Astrocyte of the cerebellum (primary cell): ENCODE measurements at regions of chr1 and their contacts with region 1.

Region 1: DNA sequence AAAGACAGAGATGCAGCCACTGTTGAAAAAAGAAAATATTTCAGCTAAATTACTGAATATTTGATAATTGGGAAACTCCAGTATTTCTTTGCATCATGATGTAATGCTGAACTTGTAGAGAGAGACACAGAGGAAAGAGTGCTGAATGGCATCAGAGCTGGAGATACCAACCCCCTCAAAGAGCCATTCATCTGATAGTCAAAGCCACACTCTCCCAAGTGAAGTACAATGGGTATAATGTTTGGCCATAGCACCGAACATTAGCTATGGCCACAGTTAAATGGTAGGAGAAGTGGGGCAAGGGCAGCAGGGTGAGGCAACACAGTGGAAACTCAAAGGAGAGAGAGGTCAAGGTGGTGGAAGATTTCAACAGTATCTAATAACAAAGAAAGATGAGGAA is 107.5 kb upstream of the TNFSF4 start:
- DNase-seq: no peak
- H3K4me3 ChIP-seq: no peak overlapping the region
- CTCF ChIP-seq: no peak

Region 2: GRCh38 chr1:172895050-172895460 is 419.6 kb before region 1 on chr1:
- in situ Hi-C with region 1: no loop called
- DNase-seq: no peak
- H3K4me3 ChIP-seq: no peak overlapping the region
- CTCF ChIP-seq: no peak

Region 3: GRCh38 chr1:172993462-172994039 is 321.1 kb before region 1 on chr1:
- in situ Hi-C with region 1: no loop called
- DNase-seq: no peak
- H3K4me3 ChIP-seq: no peak overlapping the region
- CTCF ChIP-seq: no peak

Region 4: DNA sequence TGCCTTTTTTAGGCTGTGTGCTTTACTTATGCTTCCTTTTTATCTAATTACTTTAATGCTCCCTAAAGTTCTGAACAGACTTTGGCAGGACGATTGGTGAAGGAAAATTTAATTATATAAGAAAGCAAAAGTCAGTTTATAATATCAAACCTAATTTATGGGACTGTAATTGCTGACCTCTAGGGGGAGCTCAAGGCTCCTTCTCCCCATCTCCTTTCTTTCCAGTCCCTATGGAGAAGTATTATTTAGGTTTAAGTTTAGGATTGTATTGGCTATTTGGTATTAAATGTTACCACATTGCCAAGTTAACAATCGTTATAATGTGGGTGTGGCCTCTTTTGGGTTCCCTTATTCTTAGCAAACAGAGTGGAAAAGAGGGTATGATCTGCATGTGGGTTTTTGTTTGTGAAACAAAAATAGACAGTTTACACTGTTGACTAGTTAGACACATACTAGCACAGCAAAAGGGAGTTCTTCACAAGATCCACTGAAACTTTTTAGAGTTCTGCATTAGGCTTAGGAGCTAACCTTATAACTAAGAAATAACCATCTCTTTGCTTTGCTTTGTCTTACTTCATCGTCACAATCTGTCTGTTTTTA is 59.3 kb before region 1 on chr1:
- in situ Hi-C with region 1: no loop called
- DNase-seq: peak; percentile 28
- H3K4me3 ChIP-seq: no peak overlapping the region
- CTCF ChIP-seq: peak; percentile 72

Region 5: GRCh38 chr1:173280899-173281660 is 33.6 kb before region 1 on chr1:
- in situ Hi-C with region 1: loop called (anchors 5 kb)
- DNase-seq: peak; percentile 23
- H3K4me3 ChIP-seq: no peak overlapping the region
- CTCF ChIP-seq: no peak